A549 (cell line): ENCODE measurements at regions of chr5 and their contacts with region 1.

Region 1: DNA sequence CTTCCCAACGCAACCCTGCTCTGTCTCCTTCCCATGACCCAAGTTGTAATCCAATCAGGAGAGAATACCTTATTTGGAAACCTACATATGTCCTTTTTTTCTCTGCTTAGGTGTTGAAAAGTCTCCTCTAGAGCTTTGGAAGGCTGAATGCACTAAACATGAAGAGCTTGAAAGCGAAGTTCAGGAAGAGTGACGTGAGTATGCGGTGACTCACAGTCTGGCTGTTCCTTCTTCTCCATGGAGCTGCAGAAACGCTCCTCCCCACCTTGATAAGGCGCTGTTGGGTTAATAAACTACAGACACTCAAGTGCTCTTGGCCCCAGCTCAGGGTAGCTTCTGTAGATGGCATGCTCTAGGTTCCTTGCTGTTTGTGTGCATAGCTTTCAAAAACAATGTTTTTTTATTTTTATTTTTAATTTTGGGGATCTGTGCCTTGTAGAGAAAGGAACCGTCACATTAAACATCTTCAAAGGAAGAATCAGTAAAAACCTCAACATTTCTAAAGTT is 30.7 kb downstream of the RAI14 start:
- DNase-seq: peak; percentile 71 to 99
- ATAC-seq: peak; percentile 88 to 95
- H3K4me3 ChIP-seq: peak overlapping the region; percentile 32; the same call in 2 of the 3 replicates
- H3K27ac ChIP-seq: peak overlapping the region; percentile 85 to 93
- H3K4me1 ChIP-seq: peaks cover 91% of the 10 kb centered on the region
- CTCF ChIP-seq: no peak
- EP300 ChIP-seq: peak; percentile 67 to 75; a peak in 2 of 5 replicates
- POLR2A ChIP-seq: no peak
- RAD21 ChIP-seq: peak; percentile 30 to 40; a peak in 4 of 5 replicates

Region 2: DNA sequence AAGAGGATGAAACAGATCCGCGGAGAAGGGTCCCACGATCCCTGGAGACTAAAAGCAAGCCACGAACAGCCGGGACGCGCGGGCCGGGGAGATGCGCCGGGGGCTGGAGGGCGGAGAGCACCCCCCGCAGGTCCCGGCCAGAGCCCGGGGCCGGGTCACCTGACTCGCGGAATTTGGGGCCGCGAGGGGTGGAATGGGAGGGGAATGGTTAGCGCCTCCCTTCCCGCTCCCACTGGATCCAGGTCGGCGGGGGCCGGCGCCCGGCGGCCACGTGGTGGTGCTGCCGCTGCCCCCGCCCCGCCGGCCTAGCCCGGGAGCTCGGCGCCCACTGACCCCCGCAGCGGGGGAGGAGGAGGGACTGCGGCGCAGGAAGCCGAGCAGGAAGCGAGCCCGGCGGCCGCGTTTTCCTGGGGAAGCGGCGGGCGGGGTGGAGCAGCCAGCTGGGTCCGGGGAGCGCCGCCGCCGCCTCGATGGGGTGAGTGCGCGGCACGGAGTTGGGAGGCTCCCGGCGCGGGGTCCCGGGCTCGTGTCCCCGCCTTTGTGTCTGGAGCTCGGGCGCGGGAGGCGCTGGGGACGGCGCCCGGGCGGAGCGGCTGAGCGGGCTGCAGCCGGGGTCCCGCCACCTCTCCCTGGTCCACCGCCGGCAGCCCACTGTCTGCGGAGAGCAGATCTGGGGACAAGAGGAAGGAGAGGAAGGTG is 30.7 kb before region 1 on chr5 and contains the start of gene RAI14:
- CTCF ChIA-PET with region 1: interaction called, 3 read pairs
- POLR2A ChIA-PET with region 1: interaction called, 10 read pairs
- DNase-seq: peak; percentile 81 to 89
- ATAC-seq: peak; percentile 84 to 89
- H3K4me3 ChIP-seq: peak within 1 kb of the TSS; percentile 85
- H3K27ac ChIP-seq: peak within 1 kb of the TSS; percentile 95 to 98
- H3K4me1 ChIP-seq: peaks cover 49% of the 10 kb centered on the region
- CTCF ChIP-seq: peak; percentile 23
- EP300 ChIP-seq: no peak
- POLR2A ChIP-seq: peak; percentile 50
- RAD21 ChIP-seq: peak; percentile 10 to 59; a peak in 4 of 5 replicates
- polyA plus RNA-seq, gene RAI14: 97.7 and 113 TPM in 2 replicates